ENCODE measurements at regions of chr7 and their contacts with region 1.

Region 1: DNA sequence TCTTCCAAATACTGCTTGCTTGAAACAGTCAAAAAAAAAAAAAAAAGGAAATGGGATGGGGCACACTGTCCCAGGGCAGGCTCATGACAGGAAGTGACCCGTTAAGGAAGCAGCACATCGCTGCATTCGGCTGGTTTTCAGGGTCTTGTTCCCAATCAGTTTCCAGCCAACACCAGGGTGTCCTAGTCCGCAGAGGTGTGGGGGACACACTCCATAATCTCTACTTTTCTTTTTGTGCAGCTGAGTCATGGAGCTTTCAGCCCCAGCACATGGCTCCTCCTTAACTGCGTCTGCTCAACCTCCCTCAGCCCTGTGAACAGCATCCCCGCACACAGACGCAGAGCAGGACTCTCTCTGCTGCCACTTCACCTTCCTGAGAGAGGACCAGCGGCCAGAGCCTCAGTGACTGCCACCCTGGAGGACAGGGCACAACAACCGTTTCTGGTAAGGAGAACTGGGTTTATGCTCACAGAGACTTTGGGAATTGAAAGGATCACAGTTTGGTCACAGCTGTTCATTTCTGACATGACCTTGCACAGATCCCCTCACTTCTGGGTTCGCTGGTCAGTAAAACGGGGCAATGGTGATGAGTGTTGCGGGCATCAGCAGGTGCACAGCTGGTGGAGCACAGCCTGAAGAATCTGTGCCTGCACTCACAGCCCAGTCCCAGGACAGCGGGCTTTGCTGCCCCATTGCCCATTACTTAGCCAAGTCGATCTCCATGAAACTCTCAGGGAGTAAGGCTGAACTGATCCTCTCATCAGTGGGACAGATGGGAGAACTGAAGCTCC is at the start of gene GIMAP5:
- DNase-seq: peak; percentile 65
- H3K4me3 Mint-ChIP-seq: peak within 1 kb of the TSS; percentile 99
- H3K27ac Mint-ChIP-seq: peak within 1 kb of the TSS; percentile 94
- H3K4me1 Mint-ChIP-seq: peaks cover 80% of the 10 kb centered on the region
- H3K27me3 Mint-ChIP-seq: no peaks in the 10 kb centered on the region
- total RNA-seq, gene GIMAP5: 83.9 to 84.3 TPM

Region 2: DNA sequence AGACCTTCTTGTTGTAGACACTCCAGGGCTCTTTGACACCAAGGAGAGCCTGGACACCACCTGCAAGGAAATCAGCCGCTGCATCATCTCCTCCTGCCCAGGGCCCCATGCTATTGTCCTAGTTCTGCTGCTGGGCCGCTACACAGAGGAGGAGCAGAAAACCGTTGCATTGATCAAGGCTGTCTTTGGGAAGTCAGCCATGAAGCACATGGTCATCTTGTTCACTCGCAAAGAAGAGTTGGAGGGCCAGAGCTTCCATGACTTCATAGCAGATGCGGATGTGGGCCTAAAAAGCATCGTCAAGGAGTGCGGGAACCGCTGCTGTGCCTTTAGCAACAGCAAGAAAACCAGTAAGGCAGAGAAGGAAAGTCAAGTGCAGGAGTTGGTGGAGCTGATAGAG is 217.3 kb before region 1 on chr7:
- CTCF ChIA-PET with region 1: interaction called, 3 read pairs
- POLR2A ChIA-PET with region 1: interaction called, 28 read pairs
- DNase-seq: peak; percentile 49
- H3K4me3 Mint-ChIP-seq: peak overlapping the region; percentile 100
- H3K27ac Mint-ChIP-seq: peak overlapping the region; percentile 82
- H3K4me1 Mint-ChIP-seq: peaks cover 38% of the 10 kb centered on the region
- H3K27me3 Mint-ChIP-seq: no peaks in the 10 kb centered on the region

Region 3: GRCh38 chr7:150668472-150668911 is 69.0 kb before region 1 on chr7:
- CTCF ChIA-PET with region 1: interaction called, 3 read pairs
- POLR2A ChIA-PET with region 1: interaction called, 16 read pairs
- DNase-seq: peak; percentile 75
- H3K4me3 Mint-ChIP-seq: peak overlapping the region; percentile 41
- H3K27ac Mint-ChIP-seq: peak overlapping the region; percentile 95
- H3K4me1 Mint-ChIP-seq: peaks cover 84% of the 10 kb centered on the region
- H3K27me3 Mint-ChIP-seq: no peaks in the 10 kb centered on the region

Region 4: DNA sequence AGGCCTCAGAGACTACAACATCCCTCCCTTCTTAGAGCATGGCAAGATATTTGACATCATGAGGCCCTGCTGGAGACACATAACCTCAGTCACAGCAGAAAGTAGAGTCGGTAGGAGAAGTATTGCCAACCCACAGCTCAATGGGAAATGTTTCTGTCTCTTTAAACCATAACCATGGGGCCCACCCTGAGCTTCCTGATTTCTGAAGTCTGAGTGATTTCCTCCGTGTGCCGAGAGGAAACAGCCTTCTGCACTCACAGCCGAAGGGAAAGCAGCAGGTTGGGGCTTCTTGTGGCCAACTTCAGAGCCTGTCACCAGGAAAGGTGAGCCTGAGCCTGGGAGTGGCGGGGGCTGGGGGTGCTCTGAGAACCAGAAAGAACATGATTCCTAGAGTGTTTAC is 21.1 kb before region 1 on chr7 and contains the start of gene GIMAP1:
- CTCF ChIA-PET with region 1: interaction called, 44 read pairs
- POLR2A ChIA-PET with region 1: interaction called, 60 read pairs
- DNase-seq: peak; percentile 69
- H3K4me3 Mint-ChIP-seq: peak within 1 kb of the TSS; percentile 97
- H3K27ac Mint-ChIP-seq: peak within 1 kb of the TSS; percentile 79
- H3K4me1 Mint-ChIP-seq: peaks cover 62% of the 10 kb centered on the region
- H3K27me3 Mint-ChIP-seq: no peaks in the 10 kb centered on the region
- total RNA-seq, gene GIMAP1: 18.8 to 21.0 TPM

Region 5: DNA sequence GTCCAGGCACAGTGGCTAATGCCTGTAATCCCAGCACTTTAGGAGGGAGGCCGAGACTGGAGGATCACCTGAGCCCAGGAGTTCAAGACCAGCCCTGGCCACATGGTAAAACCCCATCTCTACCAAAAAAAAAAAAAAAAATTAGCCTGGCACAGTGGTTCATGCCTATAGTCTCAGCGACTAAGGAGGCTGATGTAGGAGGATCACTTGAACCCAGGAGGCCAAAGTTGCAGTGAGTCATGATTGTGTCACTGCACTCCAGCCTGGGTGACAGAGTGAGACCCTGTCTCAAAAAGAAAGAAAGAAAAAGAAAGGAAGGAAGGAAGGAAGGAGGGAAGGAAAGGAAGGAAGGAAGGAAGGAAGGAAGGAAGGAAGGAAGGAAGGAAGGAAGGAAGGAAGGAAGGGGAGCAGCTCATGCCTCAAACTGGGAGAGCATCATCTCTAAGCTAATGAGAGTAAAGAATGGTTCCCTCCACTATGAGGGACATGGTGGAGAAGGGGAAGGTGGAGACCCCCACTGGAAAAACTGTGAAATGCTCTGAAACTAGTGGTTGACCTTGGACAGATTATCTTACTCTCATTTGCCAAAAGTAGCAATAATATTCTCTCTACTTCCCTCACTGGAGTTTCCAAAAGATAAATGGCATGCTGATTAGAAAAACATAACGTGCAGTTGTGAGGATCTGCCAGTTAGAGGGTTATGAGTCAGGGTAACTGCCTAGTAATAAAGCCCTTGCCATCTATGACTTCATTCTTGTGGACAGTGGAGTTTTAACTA is 16.6 kb after region 1 on chr7:
- CTCF ChIA-PET with region 1: interaction called, 29 read pairs
- POLR2A ChIA-PET with region 1: interaction called, 50 read pairs
- DNase-seq: no peak
- H3K4me3 Mint-ChIP-seq: no peak overlapping the region
- H3K27ac Mint-ChIP-seq: peak overlapping the region; percentile 94
- H3K4me1 Mint-ChIP-seq: peaks cover 55% of the 10 kb centered on the region
- H3K27me3 Mint-ChIP-seq: no peaks in the 10 kb centered on the region